Heart left ventricle (tissue), 16 donors: ENCODE measurements at regions of chr10 and their contacts with region 1.

Region 1: DNA sequence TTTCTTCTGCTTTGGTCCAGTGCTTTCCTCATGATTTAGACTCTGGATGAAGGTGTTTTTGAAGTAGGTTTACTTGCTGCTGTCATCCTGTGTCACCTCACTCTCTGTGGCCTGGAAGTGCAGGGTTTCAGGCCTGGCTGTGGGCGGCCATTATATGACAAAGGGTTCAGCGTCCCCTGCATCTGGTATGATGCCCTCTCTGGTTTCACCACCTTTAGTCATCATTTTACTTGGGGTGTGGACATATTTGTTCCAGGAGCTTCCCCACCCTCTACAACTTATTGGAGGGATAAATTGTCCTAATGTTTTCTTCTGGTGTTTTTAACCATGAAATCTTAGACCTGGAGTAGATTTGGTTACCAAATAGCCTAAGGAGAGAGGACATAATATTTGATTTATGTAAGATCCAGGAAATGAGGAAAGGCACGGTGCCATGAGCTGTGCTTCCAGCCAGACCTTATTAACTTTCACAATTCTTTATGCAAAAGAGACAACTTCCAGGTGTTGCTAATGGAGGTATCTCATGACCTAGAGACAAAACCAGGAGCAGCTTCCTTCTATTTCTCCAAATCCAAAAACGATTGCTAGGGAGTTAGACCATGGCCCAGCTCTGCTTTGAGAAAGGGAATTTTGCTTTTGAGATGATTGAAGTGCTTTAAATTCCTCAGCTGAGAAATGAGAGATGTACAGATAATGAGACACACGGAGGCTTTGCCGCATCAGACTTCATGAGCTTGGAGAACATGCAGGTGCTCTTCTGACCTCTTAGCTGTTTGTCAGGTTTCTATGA is 20.8 kb downstream of the WBP1L start:
- DNase-seq: no peak
- ATAC-seq: no peak
- H3K4me3 ChIP-seq: no peak overlapping the region
- H3K27ac ChIP-seq: peak overlapping the region in 8 of 12 donors; percentile 8 to 57 (median 32)
- H3K4me1 ChIP-seq: peaks cover 0 to 74% (median 32%) of the 10 kb centered on the region in 12 donors
- H3K27me3 ChIP-seq: no peaks in the 10 kb centered on the region
- CTCF ChIP-seq: no peak
- POLR2A ChIP-seq: no peak

Region 2: GRCh38 chr10:102704915-102705314 is 59.7 kb before region 1 on chr10:
- intact Hi-C with region 1: no loop called
- DNase-seq: no peak
- ATAC-seq: no peak
- H3K4me3 ChIP-seq: no peak overlapping the region
- H3K27ac ChIP-seq: no peak overlapping the region
- H3K4me1 ChIP-seq: peaks cover 0 to 9% (median 0%) of the 10 kb centered on the region in 12 donors
- H3K27me3 ChIP-seq: no peaks in the 10 kb centered on the region
- CTCF ChIP-seq: no peak
- POLR2A ChIP-seq: no peak

Region 3: GRCh38 chr10:102808380-102808779 is 43.8 kb after region 1 on chr10:
- intact Hi-C with region 1: loop called in 2 of 10 experiments (anchors 5 to 10 kb)
- DNase-seq: no peak
- ATAC-seq: no peak
- H3K4me3 ChIP-seq: no peak overlapping the region
- H3K27ac ChIP-seq: peak overlapping the region in 1 of 12 donors; percentile 58
- H3K4me1 ChIP-seq: peaks cover 0 to 48% (median 14%) of the 10 kb centered on the region in 12 donors
- H3K27me3 ChIP-seq: no peaks in the 10 kb centered on the region
- CTCF ChIP-seq: no peak
- POLR2A ChIP-seq: no peak

Region 4: GRCh38 chr10:102827597-102827975 is 63.0 kb after region 1 on chr10:
- intact Hi-C with region 1: no loop called
- DNase-seq: no peak
- ATAC-seq: no peak
- H3K4me3 ChIP-seq: no peak overlapping the region
- H3K27ac ChIP-seq: no peak overlapping the region
- H3K4me1 ChIP-seq: no peaks in the 10 kb centered on the region
- H3K27me3 ChIP-seq: no peaks in the 10 kb centered on the region
- CTCF ChIP-seq: no peak
- POLR2A ChIP-seq: no peak